Breast epithelium (tissue), 4 donors: ENCODE measurements at regions of chr16 and their contacts with region 1.

Region 1: DNA sequence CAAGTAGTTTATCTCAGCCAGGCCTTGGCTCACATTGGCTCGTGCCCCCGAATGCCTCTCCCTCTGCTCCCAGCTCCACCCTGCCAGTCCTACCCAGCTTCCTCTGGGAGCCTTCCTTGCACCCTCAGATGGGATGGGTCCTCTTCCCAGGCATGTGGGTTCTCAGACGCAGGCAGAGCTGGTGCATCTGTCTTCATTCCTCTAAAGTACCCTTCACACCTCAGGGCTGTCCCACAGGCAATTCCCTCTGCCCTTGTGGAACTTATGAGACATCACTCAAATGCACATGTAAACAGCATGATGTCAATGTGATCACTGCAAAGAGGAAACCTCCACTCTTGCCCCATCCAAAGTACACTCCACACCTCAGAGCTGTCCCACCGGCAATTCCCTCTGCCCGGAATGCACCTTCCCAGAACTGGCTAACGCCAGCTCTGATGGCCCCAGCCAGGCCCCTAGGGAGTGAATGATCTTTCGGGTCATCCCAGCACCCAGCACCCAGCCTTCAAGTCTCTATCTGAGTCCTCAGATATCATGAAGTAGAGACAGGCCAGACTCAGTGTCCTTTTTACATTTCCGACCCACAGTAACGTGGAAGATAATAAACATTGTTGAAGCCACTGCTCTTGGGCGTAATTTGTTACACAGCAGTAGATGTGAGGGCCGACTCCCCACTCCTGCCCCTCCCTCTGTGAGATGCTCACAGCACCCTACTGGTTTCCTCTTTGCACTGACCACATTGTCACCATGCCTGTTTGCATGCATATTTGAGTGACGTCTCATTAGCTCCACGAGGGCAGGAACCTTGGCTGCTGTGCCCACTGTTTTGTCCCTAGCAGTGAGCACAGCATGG is 85.4 kb downstream of the N4BP1 start:
- DNase-seq: no peak
- H3K4me3 ChIP-seq: no peak overlapping the region
- H3K27ac ChIP-seq: no peak overlapping the region
- H3K4me1 ChIP-seq: no peaks in the 10 kb centered on the region
- H3K27me3 ChIP-seq: no peaks in the 10 kb centered on the region
- CTCF ChIP-seq: no peak
- POLR2A ChIP-seq: no peak

Region 2: DNA sequence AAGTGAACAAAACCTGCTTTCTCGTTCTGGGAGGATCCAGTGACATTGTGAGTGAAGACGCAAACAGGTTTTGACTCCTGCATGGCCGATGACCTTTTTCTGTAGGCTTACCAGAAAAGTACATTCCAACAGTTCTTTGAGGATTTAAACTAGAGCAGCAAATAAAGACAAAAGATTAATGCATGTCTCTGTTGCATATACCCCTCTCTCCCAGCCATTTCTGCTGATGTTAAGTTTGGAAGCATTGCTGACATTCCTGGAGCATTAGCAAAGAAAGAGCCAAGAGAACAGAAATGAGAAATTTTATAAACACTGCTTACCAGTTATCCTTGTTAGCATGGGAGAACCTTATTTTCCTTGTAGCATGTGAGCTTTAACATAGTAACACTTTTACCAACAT is 188.6 kb before region 1 on chr16:
- intact Hi-C with region 1: no loop called
- DNase-seq: no peak
- H3K4me3 ChIP-seq: no peak overlapping the region
- H3K27ac ChIP-seq: no peak overlapping the region
- H3K4me1 ChIP-seq: no peaks in the 10 kb centered on the region
- H3K27me3 ChIP-seq: no peaks in the 10 kb centered on the region
- CTCF ChIP-seq: no peak
- POLR2A ChIP-seq: no peak

Region 3: GRCh38 chr16:48365581-48366164 is 158.9 kb before region 1 on chr16:
- intact Hi-C with region 1: loop called (anchors 5 kb)
- DNase-seq: peak; percentile 88 to 89
- H3K4me3 ChIP-seq: peak overlapping the region; percentile 58 to 69 (median 63)
- H3K27ac ChIP-seq: peak overlapping the region; percentile 88 to 95
- H3K4me1 ChIP-seq: peaks cover 5 to 15% of the 10 kb centered on the region in 2 donors
- H3K27me3 ChIP-seq: no peaks in the 10 kb centered on the region
- CTCF ChIP-seq: no peak
- POLR2A ChIP-seq: peak; percentile 39